Right cardiac atrium (tissue), 5 donors: ENCODE measurements at regions of chr5 and their contacts with region 1.

Region 1: GRCh38 chr5:17761326-17761725 is 127.1 kb downstream of the TAF11L14 start:
- DNase-seq: no peak
- ATAC-seq: no peak
- H3K4me3 ChIP-seq: no peak overlapping the region
- H3K27ac ChIP-seq: no peak overlapping the region
- H3K4me1 ChIP-seq: no peaks in the 10 kb centered on the region
- H3K27me3 ChIP-seq: no peaks in the 10 kb centered on the region

Region 2: GRCh38 chr5:17663182-17663581 is 98.1 kb before region 1 on chr5:
- intact Hi-C with region 1: loop called in 1 of 4 experiments (anchors 2 kb)
- DNase-seq: no peak
- ATAC-seq: no peak
- H3K4me3 ChIP-seq: no peak overlapping the region
- H3K27ac ChIP-seq: no peak overlapping the region
- H3K4me1 ChIP-seq: no peaks in the 10 kb centered on the region
- H3K27me3 ChIP-seq: no peaks in the 10 kb centered on the region

Region 3: DNA sequence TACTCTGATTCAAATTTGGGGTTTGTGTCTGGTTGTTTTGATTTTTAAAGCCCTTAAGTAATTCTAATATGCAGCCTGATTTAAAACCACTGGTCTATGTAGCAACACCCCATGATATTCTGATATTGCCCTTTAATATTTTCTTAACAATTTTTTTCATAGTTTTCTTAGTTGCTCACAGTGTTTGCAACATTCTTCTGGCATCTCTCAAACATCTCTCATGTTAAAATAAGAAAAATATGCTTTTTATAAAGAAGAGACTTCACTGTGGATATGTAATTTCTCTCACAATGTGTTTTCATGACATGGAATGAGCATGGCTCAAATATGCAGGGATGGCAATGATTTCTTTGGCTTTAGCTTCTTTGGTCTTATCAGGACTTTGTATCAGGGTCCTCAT is 56.7 kb after region 1 on chr5:
- intact Hi-C with region 1: no loop called
- DNase-seq: no peak
- ATAC-seq: no peak
- H3K4me3 ChIP-seq: no peak overlapping the region
- H3K27ac ChIP-seq: no peak overlapping the region
- H3K4me1 ChIP-seq: no peaks in the 10 kb centered on the region
- H3K27me3 ChIP-seq: no peaks in the 10 kb centered on the region